ENCODE measurements at regions of chr6 and their contacts with region 1.

Region 1: GRCh38 chr6:33949877-33950435 is 146.2 kb upstream of the MLN start:
- DNase-seq: no peak
- H3K4me3 ChIP-seq: no peak overlapping the region
- CTCF ChIP-seq: no peak

Region 2: GRCh38 chr6:33875141-33875581 is 74.8 kb before region 1 on chr6:
- in situ Hi-C with region 1: loop called (anchors 10 kb)
- DNase-seq: no peak
- H3K4me3 ChIP-seq: no peak overlapping the region
- CTCF ChIP-seq: no peak

Region 3: GRCh38 chr6:34005901-34006531 is 56.1 kb after region 1 on chr6:
- in situ Hi-C with region 1: no loop called
- DNase-seq: no peak
- H3K4me3 ChIP-seq: no peak overlapping the region
- CTCF ChIP-seq: no peak

Measured in astrocyte of the cerebellum (primary cell).